Activated naive CD4-positive, alpha-beta T cell treated with anti-CD3 and anti-CD28 coated beads, Interleukin-2, amount 10 ng/mL, durations not matched to agents 7 days and 5 days (primary cell): ENCODE measurements at regions of chr2 and their contacts with region 1.

Region 1: GRCh38 chr2:176653479-176654443 is 384.5 kb downstream of the MTX2 start:
- DNase-seq: peak; percentile 52
- H3K4me3 Mint-ChIP-seq: no peak overlapping the region
- H3K27ac Mint-ChIP-seq: no peak overlapping the region
- H3K4me1 Mint-ChIP-seq: peaks cover 5% of the 10 kb centered on the region
- H3K27me3 Mint-ChIP-seq: peaks cover 19% of the 10 kb centered on the region

Region 2: GRCh38 chr2:176454893-176455811 is 198.6 kb before region 1 on chr2:
- CTCF ChIA-PET with region 1: interaction called, 11 read pairs
- DNase-seq: peak; percentile 87
- H3K4me3 Mint-ChIP-seq: no peak overlapping the region
- H3K27ac Mint-ChIP-seq: no peak overlapping the region
- H3K4me1 Mint-ChIP-seq: no peaks in the 10 kb centered on the region
- H3K27me3 Mint-ChIP-seq: peaks cover 40% of the 10 kb centered on the region

Region 3: DNA sequence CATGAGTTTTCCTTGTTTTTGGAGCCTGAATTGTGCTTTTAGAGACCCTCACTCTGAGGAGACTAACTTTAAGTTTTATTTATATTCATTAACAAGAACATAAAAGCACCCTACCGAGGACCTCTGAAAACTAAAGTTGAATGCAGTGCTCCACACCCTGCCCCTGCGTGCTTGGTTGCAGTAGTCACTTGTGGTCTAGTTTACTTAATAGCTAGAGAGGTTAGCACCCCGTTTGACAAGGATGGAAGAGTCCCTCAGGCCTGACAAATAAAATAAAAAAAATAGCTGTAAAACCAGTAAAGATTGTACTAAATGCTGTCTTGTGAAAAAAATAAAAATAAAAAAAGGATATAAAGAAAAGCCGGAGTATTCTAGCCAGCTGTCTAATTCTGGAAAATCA is 10.7 kb after region 1 on chr2:
- CTCF ChIA-PET with region 1: interaction called, 11 read pairs
- DNase-seq: no peak
- H3K4me3 Mint-ChIP-seq: no peak overlapping the region
- H3K27ac Mint-ChIP-seq: no peak overlapping the region
- H3K4me1 Mint-ChIP-seq: no peaks in the 10 kb centered on the region
- H3K27me3 Mint-ChIP-seq: peaks cover 23% of the 10 kb centered on the region

Region 4: DNA sequence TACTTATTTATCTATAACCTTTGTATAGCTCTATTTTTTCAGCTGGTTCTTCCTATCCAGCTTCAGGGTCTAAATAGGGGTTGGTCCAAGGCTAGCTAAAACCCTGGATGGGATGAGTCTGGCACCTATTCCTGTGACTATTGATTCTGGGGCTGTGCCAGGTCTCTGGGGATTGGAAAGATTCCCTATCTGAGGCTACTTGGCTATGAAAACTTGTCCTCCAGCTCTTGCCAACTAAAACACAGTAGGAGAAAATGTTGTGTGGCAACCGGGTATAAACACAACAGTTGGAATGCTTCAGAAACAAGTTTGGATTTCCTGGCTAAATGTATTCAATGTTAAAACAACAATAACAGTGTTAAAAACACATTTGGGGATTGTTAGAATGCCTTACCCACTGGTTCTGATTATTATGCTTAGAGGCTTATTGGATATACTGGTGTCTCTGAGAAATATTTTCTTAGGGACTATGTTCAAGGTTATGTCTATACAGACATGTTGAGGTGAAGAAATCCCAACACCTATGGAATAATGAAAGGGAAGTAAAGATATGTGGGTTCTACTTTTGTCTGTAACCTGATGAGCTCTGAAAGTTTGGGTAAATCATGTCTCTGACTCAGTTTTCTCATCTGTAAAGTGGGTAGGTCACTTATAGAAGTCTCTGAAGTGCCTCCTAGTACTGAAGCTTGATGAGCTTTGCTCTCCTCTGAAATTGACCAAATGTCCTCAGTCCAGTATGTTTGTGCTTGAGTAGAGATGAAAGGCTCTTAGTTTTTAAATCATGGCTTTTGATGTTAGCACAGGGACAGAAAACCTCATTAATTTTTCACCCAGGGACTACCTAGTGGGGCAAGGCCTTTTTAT is 76.2 kb after region 1 on chr2:
- CTCF ChIA-PET with region 1: no interaction called
- DNase-seq: no peak
- H3K4me3 Mint-ChIP-seq: no peak overlapping the region
- H3K27ac Mint-ChIP-seq: no peak overlapping the region
- H3K4me1 Mint-ChIP-seq: no peaks in the 10 kb centered on the region
- H3K27me3 Mint-ChIP-seq: no peaks in the 10 kb centered on the region

Region 5: DNA sequence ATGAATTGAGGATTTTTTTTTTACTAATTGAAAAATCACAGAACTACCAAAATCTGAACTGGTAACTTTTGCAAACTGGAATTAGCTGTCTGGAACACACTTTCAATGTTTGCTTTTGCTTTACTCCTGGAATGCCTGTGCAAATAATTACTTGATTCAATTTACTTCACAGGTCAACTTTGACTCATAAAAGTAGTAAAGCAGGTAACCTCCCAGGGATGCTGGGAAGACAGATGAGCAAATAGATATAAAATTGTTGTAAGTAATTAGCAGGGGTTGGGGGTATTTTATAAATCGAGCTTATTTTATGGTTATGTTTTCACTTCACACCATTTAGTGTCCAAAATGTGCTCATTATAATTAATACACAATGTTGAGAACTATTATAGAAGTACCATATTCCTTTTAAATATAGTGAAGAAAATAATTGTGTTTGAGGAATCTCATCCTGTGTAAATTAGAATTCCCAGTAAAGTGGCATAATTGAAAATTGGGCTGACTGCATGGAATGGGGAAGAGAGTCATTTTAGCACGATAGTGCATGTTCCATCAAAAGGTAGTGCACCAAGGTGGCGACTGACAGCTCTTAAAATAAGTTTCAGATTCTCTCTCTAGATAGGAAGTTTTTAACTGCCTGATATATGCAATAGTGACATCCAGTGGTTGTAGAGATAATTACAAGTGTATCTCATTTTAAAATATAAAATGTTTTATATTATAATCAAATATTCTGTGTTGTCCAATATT is 160.7 kb after region 1 on chr2:
- CTCF ChIA-PET with region 1: interaction called, 13 read pairs
- DNase-seq: no peak
- H3K4me3 Mint-ChIP-seq: no peak overlapping the region
- H3K27ac Mint-ChIP-seq: no peak overlapping the region
- H3K4me1 Mint-ChIP-seq: peaks cover 7% of the 10 kb centered on the region
- H3K27me3 Mint-ChIP-seq: peaks cover 2% of the 10 kb centered on the region